Heart left ventricle (tissue), 16 donors: ENCODE measurements at regions of chr22 and their contacts with region 1.

Region 1: GRCh38 chr22:24175160-24175808 is 6.0 kb upstream of the SUSD2 start:
- DNase-seq: peak; percentile 84 to 92 (median 90)
- ATAC-seq: peak; percentile 27 to 76 (median 66)
- H3K4me3 ChIP-seq: no peak overlapping the region
- H3K27ac ChIP-seq: peak overlapping the region; percentile 23 to 85 (median 70)
- H3K4me1 ChIP-seq: peaks cover 0 to 52% (median 25%) of the 10 kb centered on the region in 12 donors
- H3K27me3 ChIP-seq: no peaks in the 10 kb centered on the region
- CTCF ChIP-seq: peak; percentile 80 to 94 (median 88)
- POLR2A ChIP-seq: no peak

Region 2: DNA sequence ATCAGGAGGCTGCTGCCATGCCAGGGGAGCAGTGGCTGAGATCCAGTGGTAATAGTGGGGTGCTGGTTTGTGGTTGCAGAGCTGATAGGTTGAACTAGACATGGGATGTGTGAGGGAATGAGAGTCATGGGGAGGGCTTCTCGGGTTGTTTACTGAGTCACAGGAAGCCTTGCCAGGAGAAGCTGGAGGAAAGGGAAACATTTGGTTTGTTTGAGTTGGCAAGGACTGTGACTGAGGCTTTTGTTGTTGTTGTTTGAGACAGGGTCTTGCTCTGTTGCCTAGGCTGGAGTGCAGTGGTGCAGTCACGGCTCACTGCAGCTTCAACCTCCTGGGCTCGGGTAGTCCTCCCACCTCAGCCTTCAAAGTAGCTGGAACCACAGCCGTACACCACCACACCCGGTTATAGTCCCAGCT is 114.9 kb before region 1 on chr22:
- intact Hi-C with region 1: loop called in 1 of 10 experiments (anchors 5 kb)
- DNase-seq: peak in 1 of 5 donors; percentile 31
- ATAC-seq: peak; percentile 49 to 79 (median 75)
- H3K4me3 ChIP-seq: no peak overlapping the region
- H3K27ac ChIP-seq: peak overlapping the region in 5 of 12 donors; percentile 3 to 60 (median 42)
- H3K4me1 ChIP-seq: peaks cover 0 to 29% (median 17%) of the 10 kb centered on the region in 12 donors
- H3K27me3 ChIP-seq: no peaks in the 10 kb centered on the region
- CTCF ChIP-seq: no peak
- POLR2A ChIP-seq: no peak

Region 3: DNA sequence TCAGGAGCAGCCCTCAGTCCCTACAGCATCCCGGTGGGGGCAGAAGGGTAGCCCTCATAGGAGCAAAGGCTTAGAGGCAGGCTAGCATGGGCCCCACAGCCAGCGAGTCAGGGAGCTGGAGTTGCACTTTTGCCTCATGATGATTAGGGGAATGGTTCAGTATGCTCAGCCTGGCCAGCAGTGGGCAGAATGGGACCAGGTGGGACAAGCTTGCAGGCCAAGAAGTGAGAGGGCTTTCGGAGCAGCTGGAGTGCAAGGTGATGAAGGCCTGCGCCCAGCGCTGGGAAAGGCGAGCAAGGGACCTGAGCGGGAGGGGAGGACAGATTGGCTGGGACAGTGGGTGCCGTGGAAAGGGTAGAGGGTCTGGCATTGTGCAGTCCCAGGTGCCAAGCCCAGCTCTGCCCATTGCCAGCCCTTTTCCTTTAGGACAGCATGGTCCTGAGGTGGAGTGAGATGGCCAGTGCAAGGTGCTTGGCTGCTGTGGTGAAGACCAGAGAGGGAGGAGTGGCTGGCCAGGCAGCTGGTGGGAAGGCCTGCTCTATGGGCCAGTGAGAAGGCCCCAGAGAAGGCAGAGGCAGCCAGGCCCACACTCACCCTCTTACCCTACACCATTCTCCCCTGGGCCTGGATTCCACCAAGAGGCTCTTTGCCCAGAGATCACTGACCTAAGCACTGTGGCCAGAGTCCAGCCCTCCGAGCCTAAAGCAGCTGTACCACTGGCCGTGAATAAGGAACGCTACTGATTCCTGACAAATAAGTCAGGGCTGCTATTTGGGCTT is 41.9 kb before region 1 on chr22:
- intact Hi-C with region 1: loop called in 4 of 10 experiments (anchors 1 to 2 kb)
- DNase-seq: peak in 2 of 5 donors; percentile 54 to 61
- ATAC-seq: peak in 3 of 4 donors; percentile 48 to 59 (median 55)
- H3K4me3 ChIP-seq: no peak overlapping the region
- H3K27ac ChIP-seq: no peak overlapping the region
- H3K4me1 ChIP-seq: peaks cover 0 to 22% (median 13%) of the 10 kb centered on the region in 12 donors
- H3K27me3 ChIP-seq: no peaks in the 10 kb centered on the region
- CTCF ChIP-seq: peak in 11 of 12 donors; percentile 14 to 52 (median 36)
- POLR2A ChIP-seq: no peak

Region 4: GRCh38 chr22:24751518-24751917 is 576.2 kb after region 1 on chr22:
- intact Hi-C with region 1: no loop called
- DNase-seq: no peak
- ATAC-seq: no peak
- H3K4me3 ChIP-seq: no peak overlapping the region
- H3K27ac ChIP-seq: no peak overlapping the region
- H3K4me1 ChIP-seq: no peaks in the 10 kb centered on the region
- H3K27me3 ChIP-seq: no peaks in the 10 kb centered on the region
- CTCF ChIP-seq: no peak
- POLR2A ChIP-seq: no peak